AG04449 (cell line): ENCODE measurements at regions of chr14 and their contacts with region 1.

Region 1: GRCh38 chr14:32244404-32244803 is 41.3 kb upstream of the RNU6-8 start:
- DNase-seq: no peak
- H3K4me3 ChIP-seq: no peak overlapping the region
- CTCF ChIP-seq: peak; percentile 37

Region 2: DNA sequence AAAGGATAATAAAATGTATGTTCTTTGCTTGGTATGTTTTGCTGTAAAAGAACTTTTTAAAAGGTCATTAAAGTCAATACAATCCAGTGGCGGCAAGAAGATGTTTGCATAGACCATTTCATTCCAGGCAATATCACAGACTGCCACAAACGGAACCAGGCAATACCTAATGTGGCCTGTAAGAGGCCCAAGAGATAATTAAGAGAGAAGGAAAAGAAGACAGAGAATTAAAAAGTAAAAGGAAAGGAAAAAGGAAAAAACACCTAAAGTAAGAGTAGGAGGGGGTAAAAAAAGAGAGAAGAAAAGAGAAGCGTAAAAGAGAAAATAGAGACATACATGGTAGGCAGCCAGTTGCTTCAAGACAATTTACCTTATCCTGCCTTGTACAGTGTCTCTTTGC is 174.1 kb before region 1 on chr14:
- CTCF ChIA-PET with region 1: interaction called, 236 read pairs
- POLR2A ChIA-PET with region 1: no interaction called
- DNase-seq: no peak
- H3K4me3 ChIP-seq: no peak overlapping the region
- CTCF ChIP-seq: no peak